Activated naive CD4-positive, alpha-beta T cell treated with anti-CD3 and anti-CD28 coated beads, Interleukin-2, amount 10 ng/mL, durations not matched to agents 7 days and 5 days (primary cell): ENCODE measurements at regions of chr11 and their contacts with region 1.

Region 1: DNA sequence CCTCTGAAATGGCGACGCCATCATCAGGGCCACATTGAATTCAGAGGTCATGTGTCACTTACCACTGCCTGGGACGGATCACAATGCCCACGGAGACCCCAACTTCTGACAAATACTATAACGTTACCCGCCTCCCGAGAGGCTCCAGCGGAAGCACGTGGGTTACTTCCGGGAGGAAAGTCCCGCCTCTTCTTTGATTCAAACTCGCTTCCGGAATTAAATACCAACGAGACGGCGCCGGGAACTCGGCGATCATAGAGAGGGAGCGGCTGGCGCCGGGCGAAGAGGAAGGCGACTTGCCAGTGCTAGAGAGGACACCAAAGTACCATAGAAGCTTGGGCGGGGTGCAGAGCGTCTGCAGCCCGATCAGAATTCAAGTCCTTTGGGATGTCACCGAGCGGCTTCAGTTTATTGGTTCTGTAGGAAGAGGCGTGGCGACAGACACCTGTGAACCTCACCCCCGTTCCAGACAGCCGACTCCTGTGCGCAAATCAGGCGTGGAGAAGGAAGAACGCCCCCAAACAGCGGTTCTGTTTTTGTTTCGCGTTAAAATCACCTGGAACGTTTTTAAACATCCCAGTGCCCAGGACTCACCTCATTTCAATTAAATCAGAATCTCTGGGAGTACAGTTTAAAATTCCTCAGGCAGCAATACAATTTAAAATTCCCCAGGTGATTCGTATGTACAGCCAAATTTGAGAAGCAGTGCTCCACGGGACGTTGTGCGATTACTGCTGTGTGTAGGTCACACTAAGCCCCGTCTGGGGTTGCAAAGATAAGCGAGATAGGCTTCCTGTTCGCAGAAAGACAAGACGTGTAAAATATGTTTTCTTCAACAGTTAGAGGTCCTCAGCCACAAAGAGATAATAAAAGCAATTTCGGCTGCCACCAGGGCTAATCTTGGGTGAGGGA is at the start of gene TIMM10:
- DNase-seq: peak; percentile 96
- H3K4me3 Mint-ChIP-seq: peak within 1 kb of the TSS; percentile 84
- H3K27ac Mint-ChIP-seq: peak within 1 kb of the TSS; percentile 93
- H3K4me1 Mint-ChIP-seq: peaks cover 44% of the 10 kb centered on the region
- H3K27me3 Mint-ChIP-seq: no peaks in the 10 kb centered on the region

Region 2: DNA sequence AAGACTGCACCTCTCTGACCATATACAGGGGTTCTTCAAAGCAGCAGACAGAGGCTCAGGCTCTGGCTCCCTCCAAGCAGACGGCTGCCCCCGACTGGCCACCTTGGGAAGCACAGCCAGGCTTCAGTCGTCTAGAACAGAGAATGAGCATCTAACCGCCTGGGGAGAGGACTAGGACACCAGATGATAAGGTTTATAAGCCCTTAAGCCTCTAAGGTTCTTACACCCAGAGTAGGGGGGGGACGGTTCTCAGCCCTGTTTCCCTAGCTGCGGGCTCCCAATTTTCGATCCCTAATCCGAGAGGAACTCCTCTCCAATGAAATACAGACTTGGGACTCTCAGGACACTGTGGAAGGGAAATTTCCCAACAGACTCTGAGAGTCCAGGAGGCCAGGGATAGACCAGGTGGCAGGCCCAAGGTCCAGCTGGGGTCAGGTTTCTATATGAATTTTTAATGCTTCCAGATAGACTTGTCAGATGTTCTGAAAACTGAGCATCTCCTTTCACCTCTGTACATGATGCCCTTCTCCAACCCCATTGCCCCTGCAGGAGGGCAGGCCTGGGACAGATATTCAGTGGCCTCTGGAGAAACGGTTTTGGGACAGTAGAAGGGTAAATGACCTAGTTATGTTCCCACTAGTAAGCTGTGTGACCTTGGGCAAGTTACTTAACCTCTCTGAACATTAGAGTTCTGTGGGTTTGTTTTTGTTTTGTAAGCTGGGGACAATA is 50.3 kb before region 1 on chr11:
- CTCF ChIA-PET with region 1: interaction called, 22 read pairs
- DNase-seq: peak; percentile 86
- H3K4me3 Mint-ChIP-seq: no peak overlapping the region
- H3K27ac Mint-ChIP-seq: no peak overlapping the region
- H3K4me1 Mint-ChIP-seq: peaks cover 30% of the 10 kb centered on the region
- H3K27me3 Mint-ChIP-seq: peaks cover 83% of the 10 kb centered on the region

Region 3: DNA sequence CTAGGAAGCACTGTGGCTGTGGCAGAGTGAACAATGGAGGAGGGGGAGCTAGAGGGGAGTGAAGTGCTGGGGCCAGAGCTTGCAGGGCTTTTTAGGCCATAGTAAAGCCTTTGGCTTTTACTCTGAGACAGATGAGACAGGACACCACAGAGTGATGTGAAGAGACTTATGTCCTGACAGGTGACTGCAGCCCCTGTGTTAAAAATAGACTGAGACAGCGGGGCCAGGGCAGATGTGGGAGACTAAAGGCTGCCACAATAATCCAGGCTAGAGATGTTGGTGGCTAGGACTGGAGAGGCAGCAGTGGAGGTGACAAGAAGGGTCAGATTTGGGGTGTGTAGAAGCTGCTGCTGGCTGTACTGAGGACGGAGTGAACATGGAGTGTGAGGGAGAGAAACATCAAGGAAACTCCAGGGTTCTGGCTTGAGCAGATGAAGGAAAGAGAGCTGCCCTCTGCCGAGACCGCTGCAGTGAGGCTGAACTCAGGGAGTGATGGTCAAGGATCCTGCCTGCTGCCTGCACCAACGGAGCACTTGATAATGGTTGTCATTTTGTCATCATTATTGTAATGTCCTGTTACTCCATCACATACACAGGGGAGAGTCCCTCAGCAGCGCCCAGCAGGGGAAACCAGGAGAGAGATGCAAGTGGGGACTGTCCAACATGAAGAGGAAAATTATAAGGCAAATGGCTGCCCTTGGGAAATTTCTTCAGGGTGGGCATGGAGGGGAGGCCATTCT is 42.8 kb before region 1 on chr11:
- CTCF ChIA-PET with region 1: interaction called, 306 read pairs
- DNase-seq: no peak
- H3K4me3 Mint-ChIP-seq: no peak overlapping the region
- H3K27ac Mint-ChIP-seq: no peak overlapping the region
- H3K4me1 Mint-ChIP-seq: peaks cover 6% of the 10 kb centered on the region
- H3K27me3 Mint-ChIP-seq: peaks cover 11% of the 10 kb centered on the region

Region 4: GRCh38 chr11:57501953-57502352 is 28.9 kb before region 1 on chr11:
- CTCF ChIA-PET with region 1: interaction called, 306 read pairs
- DNase-seq: no peak
- H3K4me3 Mint-ChIP-seq: no peak overlapping the region
- H3K27ac Mint-ChIP-seq: no peak overlapping the region
- H3K4me1 Mint-ChIP-seq: no peaks in the 10 kb centered on the region
- H3K27me3 Mint-ChIP-seq: no peaks in the 10 kb centered on the region

Region 5: DNA sequence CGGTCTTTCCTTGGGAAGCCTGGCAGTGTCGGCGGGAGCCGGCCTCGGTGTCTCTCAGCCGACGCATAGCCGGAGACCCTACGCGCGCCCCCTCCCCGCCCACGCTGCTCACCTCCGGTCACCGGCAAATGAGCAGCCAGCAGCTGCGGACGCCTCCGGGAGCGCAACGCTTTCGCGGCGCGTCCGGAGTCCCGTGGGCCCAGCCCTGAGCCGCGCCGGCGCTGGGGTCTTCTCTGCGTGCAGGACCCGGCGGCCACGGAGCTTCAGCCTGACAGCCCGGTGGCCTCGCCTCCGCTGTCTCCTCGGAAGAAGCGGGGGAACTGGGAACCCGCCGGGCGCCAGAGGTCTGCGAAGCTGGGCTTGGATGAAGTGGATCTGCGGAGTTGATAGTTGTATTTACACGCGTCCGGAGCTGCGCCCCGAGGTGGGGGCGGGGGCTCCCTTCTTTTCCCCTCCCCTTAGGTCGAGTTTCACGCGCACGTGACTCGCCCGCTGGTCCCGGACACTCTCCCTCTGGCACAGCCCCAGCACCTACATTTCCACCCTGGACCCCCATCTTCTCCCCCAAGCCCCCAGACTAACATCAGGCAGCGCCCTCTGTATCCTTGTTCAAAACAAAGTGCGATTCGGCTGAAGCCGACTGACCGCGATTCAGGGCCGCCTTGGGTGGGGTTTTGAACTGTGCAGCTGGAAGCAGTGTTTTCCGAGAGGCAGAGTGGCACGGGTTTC is 15.4 kb before region 1 on chr11 and contains the start of gene SLC43A1:
- CTCF ChIA-PET with region 1: interaction called, 52 read pairs
- DNase-seq: peak; percentile 61
- H3K4me3 Mint-ChIP-seq: peak within 1 kb of the TSS; percentile 96
- H3K27ac Mint-ChIP-seq: peak within 1 kb of the TSS; percentile 86
- H3K4me1 Mint-ChIP-seq: peaks cover 34% of the 10 kb centered on the region
- H3K27me3 Mint-ChIP-seq: peaks cover 8% of the 10 kb centered on the region

Region 6: GRCh38 chr11:57644748-57645688 is 114.2 kb after region 1 on chr11:
- CTCF ChIA-PET with region 1: interaction called, 19 read pairs
- DNase-seq: peak; percentile 92
- H3K4me3 Mint-ChIP-seq: no peak overlapping the region
- H3K27ac Mint-ChIP-seq: no peak overlapping the region
- H3K4me1 Mint-ChIP-seq: peaks cover 47% of the 10 kb centered on the region
- H3K27me3 Mint-ChIP-seq: peaks cover 81% of the 10 kb centered on the region

Region 7: DNA sequence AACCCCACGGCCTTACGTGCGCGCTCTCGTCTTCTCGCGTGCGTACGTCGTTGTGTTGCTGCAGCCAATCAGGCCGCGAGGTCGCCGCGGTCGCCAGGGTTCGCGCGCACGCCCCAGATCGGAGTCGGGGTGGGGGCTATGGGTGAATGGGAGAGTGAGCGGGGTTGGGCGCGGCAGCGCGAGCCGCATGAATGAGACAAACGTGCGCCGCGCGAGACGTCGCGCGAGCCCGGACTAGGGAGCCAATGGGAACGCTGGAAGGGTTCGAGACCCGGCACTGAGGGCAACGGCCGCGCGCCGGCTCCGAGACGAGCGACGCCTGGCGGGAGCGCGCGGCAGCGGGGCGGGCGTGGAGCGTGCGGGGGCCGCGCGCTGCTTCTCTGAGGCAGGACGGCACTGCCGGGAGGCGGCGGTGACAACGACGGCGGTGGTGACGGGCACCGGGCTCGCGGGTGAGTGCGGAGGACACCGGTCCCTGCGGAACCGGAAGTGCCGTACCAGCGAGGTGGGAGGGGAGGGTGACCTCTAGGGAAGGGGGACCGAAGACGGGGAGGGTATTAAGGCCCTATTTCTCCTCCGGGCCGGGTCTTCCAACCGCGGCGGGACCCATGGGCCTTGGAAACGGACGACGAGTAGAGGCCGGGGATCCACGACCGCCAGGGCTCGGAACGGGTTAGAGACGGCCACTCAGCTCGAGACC is 137.0 kb after region 1 on chr11 and contains the start of gene ZDHHC5:
- CTCF ChIA-PET with region 1: no interaction called
- DNase-seq: peak; percentile 100
- H3K4me3 Mint-ChIP-seq: peak within 1 kb of the TSS; percentile 100
- H3K27ac Mint-ChIP-seq: peak within 1 kb of the TSS; percentile 97
- H3K4me1 Mint-ChIP-seq: peaks cover 53% of the 10 kb centered on the region
- H3K27me3 Mint-ChIP-seq: no peaks in the 10 kb centered on the region